Astrocyte of the cerebellum (primary cell): ENCODE measurements at regions of chr7 and their contacts with region 1.

Region 1: GRCh38 chr7:132430861-132431822 is 145.1 kb downstream of the PLXNA4 start:
- DNase-seq: peak; percentile 86
- H3K4me3 ChIP-seq: no peak overlapping the region
- CTCF ChIP-seq: no peak

Region 2: DNA sequence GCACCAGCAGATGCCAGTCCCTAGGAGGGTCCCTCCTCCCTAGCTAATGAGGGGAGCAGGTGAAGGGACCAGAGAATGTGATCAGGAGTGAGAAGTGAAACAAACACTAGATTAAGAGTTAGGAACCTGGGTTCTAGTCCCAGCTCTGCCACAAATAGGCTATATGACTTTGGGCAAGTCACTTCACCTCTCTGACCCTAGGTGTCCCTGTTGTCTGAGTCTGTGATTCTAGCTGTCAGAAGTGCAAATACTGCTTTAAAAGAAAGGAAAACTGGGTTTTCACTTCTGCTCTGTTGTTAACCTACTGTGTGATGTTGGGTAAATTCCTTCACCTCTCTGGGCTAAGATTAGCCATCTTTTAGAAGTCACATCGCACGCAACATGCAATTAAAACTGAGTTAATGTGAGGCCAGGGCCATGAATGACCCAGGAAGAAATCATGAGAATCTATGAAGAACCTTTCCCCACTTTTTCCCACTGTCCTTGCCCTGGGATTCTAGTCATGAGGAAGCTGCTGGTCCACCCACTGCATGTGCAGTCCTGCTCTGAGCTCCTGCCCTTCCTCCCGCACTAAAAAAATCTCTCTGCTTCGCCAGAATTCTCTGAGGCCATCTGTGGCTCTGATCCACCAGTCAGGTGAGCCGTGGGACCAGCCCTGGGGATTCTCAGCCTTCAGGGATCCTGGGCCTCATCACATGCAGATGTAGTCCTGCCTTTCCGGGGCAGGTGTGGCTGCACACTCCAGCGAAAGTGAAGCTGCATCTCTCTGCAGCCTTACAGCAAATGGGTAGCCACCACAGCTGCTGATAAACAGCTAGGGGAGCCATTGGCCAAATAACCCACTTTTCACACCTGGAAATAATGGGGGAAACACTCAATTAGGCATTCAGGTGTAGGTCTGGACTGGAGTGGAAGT is 36.6 kb before region 1 on chr7:
- in situ Hi-C with region 1: no loop called
- DNase-seq: no peak
- H3K4me3 ChIP-seq: no peak overlapping the region
- CTCF ChIP-seq: no peak

Region 3: GRCh38 chr7:132489776-132490237 is 58.7 kb after region 1 on chr7:
- in situ Hi-C with region 1: loop called (anchors 5 kb)
- DNase-seq: no peak
- H3K4me3 ChIP-seq: no peak overlapping the region
- CTCF ChIP-seq: no peak

Region 4: DNA sequence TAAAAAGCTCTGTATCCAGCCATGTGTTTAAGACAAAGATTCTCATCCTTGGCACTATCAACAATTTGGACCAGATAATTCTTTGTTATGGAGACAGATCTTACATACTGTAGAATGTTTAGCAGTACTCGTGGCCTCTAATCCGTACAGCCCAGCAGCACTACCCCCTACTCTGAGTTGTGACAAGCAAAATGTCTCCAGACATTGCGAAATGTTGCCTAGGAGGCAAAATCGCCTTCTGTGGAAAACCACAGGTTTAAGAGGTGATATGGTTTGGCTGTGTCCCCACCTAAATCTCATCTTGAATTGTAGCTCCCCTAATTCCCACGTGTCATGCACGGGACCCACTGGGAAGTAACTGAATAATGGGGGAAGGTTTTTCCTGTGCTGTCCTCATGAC is 464.1 kb after region 1 on chr7:
- in situ Hi-C with region 1: no loop called
- DNase-seq: no peak
- H3K4me3 ChIP-seq: no peak overlapping the region
- CTCF ChIP-seq: no peak